Activated CD4-positive, alpha-beta memory T cell treated with anti-CD3 and anti-CD28 coated beads, Interleukin-2, amount 10 ng/mL, durations not matched to agents 7 days and 5 days (primary cell): ENCODE measurements at regions of chr1 and their contacts with region 1.

Region 1: GRCh38 chr1:43389326-43390313 is at the starts of genes MED8 and SZT2:
- DNase-seq: peak; percentile 93
- H3K4me3 Mint-ChIP-seq: peak within 1 kb of the TSS; percentile 100
- H3K27ac Mint-ChIP-seq: peak within 1 kb of the TSS; percentile 95
- H3K4me1 Mint-ChIP-seq: peaks cover 41% of the 10 kb centered on the region
- H3K27me3 Mint-ChIP-seq: no peaks in the 10 kb centered on the region
- total RNA-seq, gene MED8: 35.6 to 36.9 TPM
- total RNA-seq, gene SZT2: 55.6 to 57.8 TPM

Region 2: GRCh38 chr1:43358746-43359693 is 30.6 kb before region 1 on chr1 and contains the start of gene CDC20:
- CTCF ChIA-PET with region 1: interaction called, 4 read pairs
- POLR2A ChIA-PET with region 1: interaction called, 22 read pairs
- DNase-seq: peak; percentile 100
- H3K4me3 Mint-ChIP-seq: peak within 1 kb of the TSS; percentile 98
- H3K27ac Mint-ChIP-seq: peak within 1 kb of the TSS; percentile 80
- H3K4me1 Mint-ChIP-seq: peaks cover 58% of the 10 kb centered on the region
- H3K27me3 Mint-ChIP-seq: no peaks in the 10 kb centered on the region
- total RNA-seq, gene CDC20: 130 to 141 TPM

Region 3: GRCh38 chr1:43367904-43368645 is 21.5 kb before region 1 on chr1 and contains the start of gene ELOVL1:
- CTCF ChIA-PET with region 1: interaction called, 13 read pairs
- POLR2A ChIA-PET with region 1: interaction called, 54 read pairs
- DNase-seq: peak; percentile 92
- H3K4me3 Mint-ChIP-seq: peak within 1 kb of the TSS; percentile 95
- H3K27ac Mint-ChIP-seq: peak within 1 kb of the TSS; percentile 85
- H3K4me1 Mint-ChIP-seq: peaks cover 51% of the 10 kb centered on the region
- H3K27me3 Mint-ChIP-seq: no peaks in the 10 kb centered on the region
- total RNA-seq, gene ELOVL1: 71.8 to 74.1 TPM

Region 4: GRCh38 chr1:43414634-43415223 is 25.1 kb after region 1 on chr1:
- CTCF ChIA-PET with region 1: interaction called, 13 read pairs
- POLR2A ChIA-PET with region 1: interaction called, 4 read pairs
- DNase-seq: peak; percentile 60
- H3K4me3 Mint-ChIP-seq: no peak overlapping the region
- H3K27ac Mint-ChIP-seq: no peak overlapping the region
- H3K4me1 Mint-ChIP-seq: no peaks in the 10 kb centered on the region
- H3K27me3 Mint-ChIP-seq: no peaks in the 10 kb centered on the region